ENCODE measurements at regions of chr17 and their contacts with region 1.

Region 1: DNA sequence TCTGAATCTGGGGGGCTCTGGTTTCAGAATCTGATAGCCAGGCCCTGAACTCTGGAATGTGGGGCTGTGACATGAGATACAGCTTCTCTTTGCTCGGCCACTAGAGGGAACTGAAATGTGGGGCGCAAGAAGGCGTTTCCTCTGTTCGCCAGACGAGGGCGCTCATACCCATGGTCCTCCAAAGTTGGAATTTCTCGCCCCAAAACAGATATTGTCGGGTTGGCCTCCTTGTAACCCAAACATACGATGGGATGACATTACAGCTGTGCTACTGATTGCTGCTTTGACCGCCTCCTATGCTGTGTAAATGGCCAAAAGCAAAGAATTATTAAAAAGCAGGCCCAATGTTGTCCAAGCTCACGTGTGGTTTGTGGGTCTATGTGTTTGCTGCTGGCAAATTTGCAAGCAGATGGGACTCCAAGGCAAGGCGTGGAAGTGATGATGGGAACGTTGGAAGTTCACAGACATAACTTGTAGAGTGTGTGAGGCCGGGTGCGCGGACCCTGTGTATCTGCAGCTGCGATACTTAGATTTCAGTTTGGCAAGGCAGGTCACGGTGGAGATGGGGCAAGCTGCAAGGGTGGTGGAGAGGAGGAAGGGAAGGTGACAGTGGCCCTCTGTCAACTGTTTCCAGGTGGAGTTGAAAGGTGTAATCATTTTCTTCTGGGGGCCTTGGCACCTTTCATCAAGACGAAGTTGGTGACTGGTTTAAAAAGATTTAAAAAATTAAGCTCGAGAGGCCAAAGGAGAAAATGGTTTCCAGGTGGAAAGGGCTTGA is 13.0 kb upstream of the MSI2 start:
- H3K4me3 ChIP-seq: no peak overlapping the region
- H3K27ac ChIP-seq: no peak overlapping the region
- H3K4me1 ChIP-seq: no peaks in the 10 kb centered on the region
- CTCF ChIP-seq: peak; percentile 91

Region 2: DNA sequence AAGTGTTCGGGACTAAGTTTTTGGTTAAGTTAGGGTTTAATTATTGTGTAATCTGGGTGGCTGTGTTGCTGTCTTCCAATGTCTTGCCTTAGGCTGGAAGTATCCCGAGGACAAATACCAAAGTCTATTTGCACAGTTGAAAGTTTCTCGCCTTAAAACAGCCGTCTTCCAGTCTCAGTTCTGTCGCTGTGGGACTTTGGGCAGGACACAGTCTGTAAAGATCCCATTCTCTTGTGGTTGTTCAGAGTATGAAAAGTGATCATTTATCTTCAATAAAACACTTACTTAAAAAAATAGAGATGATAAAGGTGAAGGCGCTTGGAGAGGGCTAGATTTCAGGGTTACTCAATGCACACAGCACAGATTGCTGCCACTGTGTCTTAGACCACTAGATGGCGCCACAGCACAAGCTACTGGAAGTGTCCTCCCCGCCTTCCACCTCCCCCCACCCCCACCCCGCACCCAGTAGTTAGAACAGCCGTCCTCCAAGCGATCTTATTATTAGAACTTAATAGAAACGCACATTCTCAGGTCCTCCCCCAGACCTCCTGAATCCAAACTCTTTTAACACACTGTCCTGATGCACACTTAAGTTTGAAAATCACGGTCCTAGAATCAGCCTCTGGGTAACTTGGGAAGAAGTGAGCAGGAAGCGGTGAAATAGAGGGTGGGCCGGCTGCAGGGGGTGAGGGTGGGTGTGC is 112.4 kb before region 1 on chr17:
- CTCF ChIA-PET with region 1: interaction called, 11 read pairs
- POLR2A ChIA-PET with region 1: no interaction called
- H3K4me3 ChIP-seq: peak overlapping the region; percentile 33
- H3K27ac ChIP-seq: no peak overlapping the region
- H3K4me1 ChIP-seq: no peaks in the 10 kb centered on the region; the same call in 1 of the 2 replicates
- CTCF ChIP-seq: peak; percentile 67

Region 3: GRCh38 chr17:57213180-57213825 is 30.1 kb before region 1 on chr17:
- CTCF ChIA-PET with region 1: interaction called, 22 read pairs
- POLR2A ChIA-PET with region 1: no interaction called
- H3K4me3 ChIP-seq: no peak overlapping the region
- H3K27ac ChIP-seq: no peak overlapping the region
- H3K4me1 ChIP-seq: no peaks in the 10 kb centered on the region
- CTCF ChIP-seq: no peak

Region 4: GRCh38 chr17:57271821-57272220 is 28.5 kb after region 1 on chr17:
- CTCF ChIA-PET with region 1: interaction called, 15 read pairs
- POLR2A ChIA-PET with region 1: no interaction called
- H3K4me3 ChIP-seq: no peak overlapping the region
- H3K27ac ChIP-seq: no peak overlapping the region
- H3K4me1 ChIP-seq: no peaks in the 10 kb centered on the region
- CTCF ChIP-seq: no peak

Region 5: GRCh38 chr17:57541472-57542394 is 298.4 kb after region 1 on chr17:
- CTCF ChIA-PET with region 1: interaction called, 19 read pairs
- POLR2A ChIA-PET with region 1: no interaction called
- H3K4me3 ChIP-seq: no peak overlapping the region
- H3K27ac ChIP-seq: peak overlapping the region; percentile 42
- H3K4me1 ChIP-seq: peaks cover 83% of the 10 kb centered on the region
- CTCF ChIP-seq: no peak

Region 6: GRCh38 chr17:57671667-57672632 is 428.6 kb after region 1 on chr17:
- CTCF ChIA-PET with region 1: interaction called, 47 read pairs
- POLR2A ChIA-PET with region 1: no interaction called
- H3K4me3 ChIP-seq: no peak overlapping the region
- H3K27ac ChIP-seq: no peak overlapping the region
- H3K4me1 ChIP-seq: peaks cover 8% of the 10 kb centered on the region
- CTCF ChIP-seq: peak; percentile 82

Region 7: GRCh38 chr17:57833179-57833939 is 590.0 kb after region 1 on chr17:
- CTCF ChIA-PET with region 1: interaction called, 10 read pairs
- POLR2A ChIA-PET with region 1: no interaction called
- H3K4me3 ChIP-seq: no peak overlapping the region
- H3K27ac ChIP-seq: peak overlapping the region; percentile 4; the same call in 1 of the 2 replicates
- H3K4me1 ChIP-seq: no peaks in the 10 kb centered on the region; the same call in 1 of the 2 replicates
- CTCF ChIP-seq: peak; percentile 92

Measured in HEK293 (cell line).